ENCODE measurements at regions of chr2 and their contacts with region 1.

Region 1: GRCh38 chr2:10511310-10511709 is 63.2 kb upstream of the ODC1 start:
- DNase-seq: no peak
- H3K4me3 ChIP-seq: no peak overlapping the region
- H3K27ac ChIP-seq: no peak overlapping the region
- H3K27me3 ChIP-seq: peaks cover 6% of the 10 kb centered on the region
- CTCF ChIP-seq: no peak

Region 2: GRCh38 chr2:10497797-10498251 is 13.5 kb before region 1 on chr2:
- CTCF ChIA-PET with region 1: no interaction called
- POLR2A ChIA-PET with region 1: interaction called, 10 read pairs
- DNase-seq: no peak
- H3K4me3 ChIP-seq: no peak overlapping the region
- H3K27ac ChIP-seq: no peak overlapping the region
- H3K27me3 ChIP-seq: peaks cover 13% of the 10 kb centered on the region
- CTCF ChIP-seq: no peak